CD4-positive, alpha-beta memory T cell (primary cell): ENCODE measurements at regions of chr2 and their contacts with region 1.

Region 1: GRCh38 chr2:11784747-11785610 is 38.5 kb downstream of the LPIN1 start:
- DNase-seq: peak in 4 of 5 donors; percentile 33 to 41 (median 41)
- H3K4me3 ChIP-seq: no peak overlapping the region
- H3K4me3 Mint-ChIP-seq: no peak overlapping the region
- H3K27ac ChIP-seq: no peak overlapping the region
- H3K27ac Mint-ChIP-seq: no peak overlapping the region
- H3K4me1 ChIP-seq: no peaks in the 10 kb centered on the region
- H3K4me1 Mint-ChIP-seq: peaks cover 0 to 5% (median under 1%) of the 10 kb centered on the region in 4 donors
- H3K27me3 ChIP-seq: no peaks in the 10 kb centered on the region
- H3K27me3 Mint-ChIP-seq: no peaks in the 10 kb centered on the region

Region 2: DNA sequence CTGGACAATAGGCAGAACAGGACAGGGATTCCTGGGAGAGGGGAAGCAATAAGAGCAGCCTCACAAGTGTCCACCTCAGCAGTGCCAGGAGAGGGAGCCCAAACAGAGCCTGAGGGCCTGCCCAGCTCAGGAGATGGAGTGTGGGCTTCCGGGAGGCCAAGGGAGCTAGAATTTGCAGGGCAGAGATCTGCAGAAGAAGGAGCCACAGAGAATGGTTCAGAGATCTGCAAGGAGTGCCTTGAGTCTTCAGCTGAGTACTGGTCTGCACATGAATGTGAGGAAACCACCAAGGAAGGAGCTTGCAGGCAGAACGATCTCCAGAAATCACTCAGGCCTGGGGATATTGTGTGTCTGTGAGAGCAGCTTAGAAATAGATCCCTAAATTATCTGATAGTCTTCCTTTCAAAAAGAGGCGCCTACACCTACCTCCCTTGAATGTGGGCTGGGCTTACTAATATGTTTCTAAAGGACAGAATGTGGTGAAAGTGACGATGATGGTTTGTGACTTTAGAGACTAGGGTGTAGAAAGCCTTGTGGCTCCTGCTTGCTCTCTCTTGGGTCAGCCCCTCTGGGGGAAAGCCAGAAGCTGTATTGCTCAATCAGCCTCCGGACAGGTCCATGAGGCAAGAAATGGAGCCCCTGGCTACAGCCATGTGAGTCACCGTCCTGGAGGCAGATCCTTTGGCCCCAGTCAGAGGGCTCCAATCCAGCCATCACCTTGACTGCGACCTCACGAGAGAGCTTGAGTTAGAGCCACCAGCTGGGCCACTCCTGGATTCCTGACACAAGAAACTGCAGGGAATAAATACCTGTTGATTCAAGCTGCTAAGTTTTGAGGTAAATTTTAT is 46.2 kb before region 1 on chr2:
- CTCF ChIA-PET with region 1: interaction called, 258 read pairs
- POLR2A ChIA-PET with region 1: interaction called, 15 read pairs
- intact Hi-C with region 1: no loop called
- DNase-seq: peak in 2 of 5 donors; percentile 31 to 49
- H3K4me3 ChIP-seq: no peak overlapping the region
- H3K4me3 Mint-ChIP-seq: no peak overlapping the region
- H3K27ac ChIP-seq: no peak overlapping the region
- H3K27ac Mint-ChIP-seq: peak overlapping the region in 1 of 7 donors; percentile 36
- H3K4me1 ChIP-seq: peaks cover 11% of the 10 kb centered on the region
- H3K4me1 Mint-ChIP-seq: peaks cover 3 to 20% (median 8%) of the 10 kb centered on the region in 4 donors
- H3K27me3 ChIP-seq: no peaks in the 10 kb centered on the region
- H3K27me3 Mint-ChIP-seq: peaks cover 0 to 3% of the 10 kb centered on the region in 2 donors

Region 3: GRCh38 chr2:11796190-11797171 is 11.5 kb after region 1 on chr2:
- CTCF ChIA-PET with region 1: interaction called, 22 read pairs
- POLR2A ChIA-PET with region 1: no interaction called
- intact Hi-C with region 1: no loop called
- DNase-seq: no peak
- H3K4me3 ChIP-seq: no peak overlapping the region
- H3K4me3 Mint-ChIP-seq: no peak overlapping the region
- H3K27ac ChIP-seq: no peak overlapping the region
- H3K27ac Mint-ChIP-seq: peak overlapping the region in 2 of 7 donors; percentile 57 to 77
- H3K4me1 ChIP-seq: no peaks in the 10 kb centered on the region
- H3K4me1 Mint-ChIP-seq: peaks cover 0 to 5% (median 0%) of the 10 kb centered on the region in 4 donors
- H3K27me3 ChIP-seq: no peaks in the 10 kb centered on the region
- H3K27me3 Mint-ChIP-seq: no peaks in the 10 kb centered on the region

Region 4: DNA sequence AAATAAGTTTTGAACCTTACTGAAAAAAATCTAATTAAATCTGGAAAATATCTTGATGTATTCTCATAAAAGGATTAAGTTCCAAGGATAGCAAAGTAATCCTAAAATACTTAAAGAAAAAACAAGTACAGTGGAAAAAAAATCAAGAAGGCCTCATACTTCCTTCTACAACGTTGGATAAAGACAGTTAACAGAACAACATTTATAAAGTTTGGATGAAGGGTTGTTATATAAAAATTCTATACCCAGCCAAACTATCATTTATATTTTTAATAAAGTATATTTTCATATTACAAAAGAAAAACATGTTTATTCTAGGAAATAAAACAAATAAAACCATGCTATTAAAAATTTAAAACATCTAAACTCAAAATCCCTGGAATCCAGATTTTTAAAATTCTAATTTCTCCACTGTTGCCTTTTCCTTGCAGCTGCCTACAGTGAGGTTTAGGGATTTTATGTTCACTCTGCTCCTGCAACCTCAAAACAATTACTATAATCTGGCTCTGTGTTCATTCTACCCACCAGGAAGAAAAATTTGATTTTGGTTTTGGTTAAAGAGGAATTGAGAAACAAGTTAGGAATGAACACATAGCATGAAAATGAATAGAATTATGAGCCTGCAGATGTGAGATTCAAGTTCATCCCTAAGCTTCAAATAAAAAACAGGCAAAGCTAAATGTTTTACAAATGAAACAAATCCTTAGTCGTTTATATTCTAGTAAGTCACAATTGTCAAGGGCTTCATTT is 104.3 kb after region 1 on chr2:
- CTCF ChIA-PET with region 1: no interaction called
- POLR2A ChIA-PET with region 1: no interaction called
- intact Hi-C with region 1: no loop called
- DNase-seq: no peak
- H3K4me3 ChIP-seq: no peak overlapping the region
- H3K4me3 Mint-ChIP-seq: no peak overlapping the region
- H3K27ac ChIP-seq: no peak overlapping the region
- H3K27ac Mint-ChIP-seq: no peak overlapping the region
- H3K4me1 ChIP-seq: no peaks in the 10 kb centered on the region
- H3K4me1 Mint-ChIP-seq: peaks cover 0 to 1% (median 0%) of the 10 kb centered on the region in 4 donors
- H3K27me3 ChIP-seq: no peaks in the 10 kb centered on the region
- H3K27me3 Mint-ChIP-seq: peaks cover 5 to 7% of the 10 kb centered on the region in 2 donors

Region 5: DNA sequence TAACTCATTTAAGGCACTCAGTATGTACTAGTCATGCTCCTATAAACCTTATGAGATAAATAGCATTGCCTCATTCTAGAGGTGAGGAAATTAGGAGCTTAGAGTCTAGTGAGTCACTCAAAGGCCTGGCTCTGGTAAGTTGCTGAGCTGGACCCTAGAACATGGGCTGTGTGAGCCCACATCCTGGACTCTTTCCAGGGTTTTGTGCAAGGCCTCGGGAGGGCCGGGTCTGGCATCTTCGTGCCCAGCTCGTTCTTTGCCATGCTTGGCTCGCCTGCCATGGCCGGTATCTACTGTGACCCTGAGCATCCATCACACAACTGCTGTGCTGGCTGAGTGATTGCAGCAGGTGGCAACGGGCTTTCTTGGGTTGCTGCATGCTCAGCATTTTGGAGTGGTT is 129.5 kb after region 1 on chr2:
- CTCF ChIA-PET with region 1: no interaction called
- POLR2A ChIA-PET with region 1: no interaction called
- intact Hi-C with region 1: no loop called
- DNase-seq: no peak
- H3K4me3 ChIP-seq: no peak overlapping the region
- H3K4me3 Mint-ChIP-seq: no peak overlapping the region
- H3K27ac ChIP-seq: no peak overlapping the region
- H3K27ac Mint-ChIP-seq: no peak overlapping the region
- H3K4me1 ChIP-seq: no peaks in the 10 kb centered on the region
- H3K4me1 Mint-ChIP-seq: no peaks in the 10 kb centered on the region
- H3K27me3 ChIP-seq: no peaks in the 10 kb centered on the region
- H3K27me3 Mint-ChIP-seq: no peaks in the 10 kb centered on the region

Region 6: GRCh38 chr2:12087671-12088381 is 302.8 kb after region 1 on chr2:
- CTCF ChIA-PET with region 1: no interaction called
- POLR2A ChIA-PET with region 1: no interaction called
- intact Hi-C with region 1: no loop called
- DNase-seq: no peak
- H3K4me3 ChIP-seq: no peak overlapping the region
- H3K4me3 Mint-ChIP-seq: no peak overlapping the region
- H3K27ac ChIP-seq: no peak overlapping the region
- H3K27ac Mint-ChIP-seq: no peak overlapping the region
- H3K4me1 ChIP-seq: no peaks in the 10 kb centered on the region
- H3K4me1 Mint-ChIP-seq: peaks cover 0 to 5% (median 0%) of the 10 kb centered on the region in 4 donors
- H3K27me3 ChIP-seq: no peaks in the 10 kb centered on the region
- H3K27me3 Mint-ChIP-seq: peaks cover 0 to 3% of the 10 kb centered on the region in 2 donors